ENCODE measurements at regions of chr20 and their contacts with region 1.

Region 1: GRCh38 chr20:43736588-43737158 is 9.9 kb upstream of the GTSF1L start:
- DNase-seq: peak; percentile 79
- ATAC-seq: peak; percentile 95
- H3K4me3 ChIP-seq: no peak overlapping the region
- H3K27ac ChIP-seq: no peak overlapping the region
- H3K4me1 ChIP-seq: peaks cover 38% of the 10 kb centered on the region
- H3K27me3 ChIP-seq: no peaks in the 10 kb centered on the region
- CTCF ChIP-seq: no peak
- EP300 ChIP-seq: peak; percentile 75 to 92
- POLR2A ChIP-seq: no peak
- RAD21 ChIP-seq: no peak

Region 2: GRCh38 chr20:43636429-43636828 is 100.2 kb before region 1 on chr20:
- CTCF ChIA-PET with region 1: no interaction called
- POLR2A ChIA-PET with region 1: no interaction called
- RAD21 ChIA-PET with region 1: no interaction called
- SMC1A ChIA-PET with region 1: no interaction called
- in situ Hi-C with region 1: no loop called
- intact Hi-C with region 1: no loop called
- DNase-seq: no peak
- ATAC-seq: no peak
- H3K4me3 ChIP-seq: no peak overlapping the region
- H3K27ac ChIP-seq: no peak overlapping the region
- H3K4me1 ChIP-seq: no peaks in the 10 kb centered on the region
- H3K27me3 ChIP-seq: no peaks in the 10 kb centered on the region
- CTCF ChIP-seq: no peak
- EP300 ChIP-seq: no peak
- POLR2A ChIP-seq: no peak
- RAD21 ChIP-seq: no peak

Region 3: GRCh38 chr20:43710370-43711044 is 26.2 kb before region 1 on chr20:
- CTCF ChIA-PET with region 1: interaction called, 15 read pairs
- POLR2A ChIA-PET with region 1: interaction called, 6 read pairs
- RAD21 ChIA-PET with region 1: interaction called, 8 read pairs
- SMC1A ChIA-PET with region 1: interaction called, 12 read pairs
- in situ Hi-C with region 1: no loop called
- intact Hi-C with region 1: no loop called
- DNase-seq: peak; percentile 59
- ATAC-seq: peak; percentile 85
- H3K4me3 ChIP-seq: no peak overlapping the region
- H3K27ac ChIP-seq: peak overlapping the region; percentile 74
- H3K4me1 ChIP-seq: peaks cover 30% of the 10 kb centered on the region
- H3K27me3 ChIP-seq: no peaks in the 10 kb centered on the region
- CTCF ChIP-seq: no peak
- EP300 ChIP-seq: peak in 1 of 2 experiments; percentile 76; a peak in 2 of 4 replicates
- POLR2A ChIP-seq: no peak
- RAD21 ChIP-seq: no peak

Region 4: DNA sequence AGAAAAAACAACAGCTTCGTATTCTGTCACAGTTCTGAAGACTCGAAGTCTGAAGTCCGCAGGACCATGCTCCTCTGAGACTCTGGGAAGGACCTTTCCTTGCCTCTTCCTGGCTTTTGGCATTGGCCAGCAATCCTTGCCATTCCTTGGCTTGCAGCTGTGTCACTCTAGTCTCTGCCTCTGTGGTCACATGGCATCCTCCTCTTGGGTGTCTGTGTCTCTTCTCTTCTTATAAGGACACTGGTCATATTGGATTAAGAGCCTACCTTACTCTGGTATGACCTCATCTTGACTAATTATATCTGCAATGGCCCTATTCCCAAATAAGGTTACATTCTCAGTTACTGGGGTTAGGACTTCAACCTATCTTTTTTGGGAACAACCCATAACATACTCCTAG is 40.0 kb after region 1 on chr20:
- CTCF ChIA-PET with region 1: no interaction called
- POLR2A ChIA-PET with region 1: no interaction called
- RAD21 ChIA-PET with region 1: no interaction called
- SMC1A ChIA-PET with region 1: no interaction called
- in situ Hi-C with region 1: no loop called
- intact Hi-C with region 1: no loop called
- DNase-seq: no peak
- ATAC-seq: no peak
- H3K4me3 ChIP-seq: no peak overlapping the region
- H3K27ac ChIP-seq: no peak overlapping the region
- H3K4me1 ChIP-seq: no peaks in the 10 kb centered on the region
- H3K27me3 ChIP-seq: 0 out of 4 replicates have a peak, but pooled peaks cover 0 to 2% of the 10 kb centered on the region in 2 experiments
- CTCF ChIP-seq: no peak
- EP300 ChIP-seq: no peak
- POLR2A ChIP-seq: no peak
- RAD21 ChIP-seq: no peak

Region 5: DNA sequence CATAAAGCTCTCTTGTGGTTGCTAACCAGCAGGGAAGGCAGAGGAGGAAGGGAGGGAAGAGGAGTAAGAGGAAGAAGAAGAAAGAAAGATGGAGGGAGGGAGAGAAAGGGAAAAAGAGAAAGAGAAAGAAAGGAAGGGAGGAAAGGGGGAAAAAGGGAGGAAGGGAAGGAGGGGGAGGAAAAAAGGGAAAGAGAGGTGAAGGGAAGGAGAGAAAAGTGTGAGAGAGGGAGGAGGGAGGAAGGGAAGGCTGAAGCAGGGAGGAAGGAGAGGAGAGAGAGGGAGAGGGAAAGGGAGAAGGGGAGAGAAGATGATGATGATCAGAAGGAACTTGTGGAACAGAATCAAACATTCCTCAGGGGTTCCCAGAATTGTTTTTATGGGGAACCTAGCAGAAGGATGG is 120.5 kb after region 1 on chr20:
- CTCF ChIA-PET with region 1: no interaction called
- POLR2A ChIA-PET with region 1: interaction called, 10 read pairs
- RAD21 ChIA-PET with region 1: no interaction called
- SMC1A ChIA-PET with region 1: no interaction called
- in situ Hi-C with region 1: no loop called
- intact Hi-C with region 1: no loop called
- DNase-seq: no peak
- ATAC-seq: no peak
- H3K4me3 ChIP-seq: no peak overlapping the region
- H3K27ac ChIP-seq: no peak overlapping the region
- H3K4me1 ChIP-seq: no peaks in the 10 kb centered on the region
- H3K27me3 ChIP-seq: no peaks in the 10 kb centered on the region
- CTCF ChIP-seq: no peak
- EP300 ChIP-seq: no peak
- POLR2A ChIP-seq: no peak
- RAD21 ChIP-seq: no peak